ENCODE measurements at regions of chr1 and their contacts with region 1.

Region 1: DNA sequence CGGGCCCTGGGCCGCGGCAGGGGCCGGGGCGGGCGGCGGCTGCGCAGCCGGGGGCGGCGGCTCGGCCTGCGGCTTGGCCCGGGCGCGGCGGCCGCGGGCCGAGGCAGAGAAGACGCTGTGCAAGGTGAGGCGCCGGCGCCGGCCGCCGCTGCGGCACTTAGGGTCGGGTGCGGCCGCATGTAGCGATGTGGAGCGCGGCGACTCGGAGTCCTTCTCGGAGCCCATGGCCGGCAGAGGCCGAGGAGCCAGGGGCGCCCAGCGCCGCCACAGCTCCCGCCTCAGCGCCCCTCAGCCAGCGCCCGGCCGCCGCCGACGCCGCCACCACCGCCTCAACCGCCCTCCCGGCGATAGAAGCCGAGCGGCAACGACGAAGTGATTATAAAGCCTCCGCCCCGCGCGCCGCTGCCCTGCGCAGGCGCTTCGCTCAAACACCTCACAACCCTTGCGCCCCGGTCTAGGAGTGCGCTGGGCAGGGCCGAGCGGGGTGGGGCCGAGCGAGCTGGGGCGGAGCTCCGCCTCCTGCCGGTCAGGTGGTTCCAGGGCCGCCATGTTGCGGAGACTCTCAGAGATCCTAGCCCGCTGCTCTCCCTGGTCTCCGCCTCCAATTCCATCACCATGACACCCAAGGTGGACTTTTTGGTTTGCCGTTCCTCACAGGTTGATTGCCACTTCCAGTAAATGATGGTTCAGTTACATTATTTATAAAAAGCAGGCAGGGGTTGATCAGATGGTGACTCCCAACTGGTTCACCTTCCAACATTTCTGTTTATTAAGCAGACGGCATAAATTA is at the start of gene RNF19B:
- DNase-seq: peak; percentile 92 to 95 (median 93)
- H3K4me3 ChIP-seq: peak within 1 kb of the TSS; percentile 76 to 79
- H3K4me3 Mint-ChIP-seq: peak within 1 kb of the TSS; percentile 87 to 94 (median 90)
- H3K27ac ChIP-seq: peak within 1 kb of the TSS; percentile 63
- H3K27ac Mint-ChIP-seq: peak within 1 kb of the TSS; percentile 90 to 97 (median 95)
- H3K4me1 ChIP-seq: peaks cover 38% of the 10 kb centered on the region
- H3K4me1 Mint-ChIP-seq: peaks cover 27 to 47% (median 33%) of the 10 kb centered on the region in 4 donors
- H3K27me3 ChIP-seq: no peaks in the 10 kb centered on the region
- H3K27me3 Mint-ChIP-seq: no peaks in the 10 kb centered on the region
- total RNA-seq, gene RNF19B: 28.5 to 30.6 TPM

Region 2: GRCh38 chr1:32786856-32787255 is 177.8 kb before region 1 on chr1:
- CTCF ChIA-PET with region 1: no interaction called
- POLR2A ChIA-PET with region 1: no interaction called
- intact Hi-C with region 1: no loop called
- DNase-seq: no peak
- H3K4me3 ChIP-seq: no peak overlapping the region
- H3K4me3 Mint-ChIP-seq: no peak overlapping the region
- H3K27ac ChIP-seq: no peak overlapping the region
- H3K27ac Mint-ChIP-seq: peak overlapping the region in 4 of 7 donors; percentile 61 to 79 (median 70)
- H3K4me1 ChIP-seq: no peaks in the 10 kb centered on the region
- H3K4me1 Mint-ChIP-seq: peaks cover 2 to 7% (median 3%) of the 10 kb centered on the region in 4 donors
- H3K27me3 ChIP-seq: no peaks in the 10 kb centered on the region
- H3K27me3 Mint-ChIP-seq: no peaks in the 10 kb centered on the region

Region 3: GRCh38 chr1:32933742-32934322 is 30.8 kb before region 1 on chr1:
- CTCF ChIA-PET with region 1: interaction called, 6 read pairs
- POLR2A ChIA-PET with region 1: interaction called, 18 read pairs
- intact Hi-C with region 1: no loop called
- DNase-seq: no peak
- H3K4me3 ChIP-seq: no peak overlapping the region
- H3K4me3 Mint-ChIP-seq: no peak overlapping the region
- H3K27ac ChIP-seq: no peak overlapping the region
- H3K27ac Mint-ChIP-seq: peak overlapping the region in 3 of 7 donors; percentile 43 to 91 (median 61)
- H3K4me1 ChIP-seq: no peaks in the 10 kb centered on the region
- H3K4me1 Mint-ChIP-seq: peaks cover 0 to 4% (median 0%) of the 10 kb centered on the region in 4 donors
- H3K27me3 ChIP-seq: no peaks in the 10 kb centered on the region
- H3K27me3 Mint-ChIP-seq: no peaks in the 10 kb centered on the region

Region 4: GRCh38 chr1:32953495-32953894 is 11.2 kb before region 1 on chr1:
- CTCF ChIA-PET with region 1: interaction called, 4 read pairs
- POLR2A ChIA-PET with region 1: interaction called, 28 read pairs
- intact Hi-C with region 1: no loop called
- DNase-seq: no peak
- H3K4me3 ChIP-seq: no peak overlapping the region
- H3K4me3 Mint-ChIP-seq: peak overlapping the region in 1 of 8 donors; percentile 15
- H3K27ac ChIP-seq: no peak overlapping the region
- H3K27ac Mint-ChIP-seq: peak overlapping the region in 4 of 7 donors; percentile 1 to 67 (median 40)
- H3K4me1 ChIP-seq: peaks cover 35% of the 10 kb centered on the region
- H3K4me1 Mint-ChIP-seq: peaks cover 30 to 63% (median 45%) of the 10 kb centered on the region in 4 donors
- H3K27me3 ChIP-seq: no peaks in the 10 kb centered on the region
- H3K27me3 Mint-ChIP-seq: no peaks in the 10 kb centered on the region

Region 5: DNA sequence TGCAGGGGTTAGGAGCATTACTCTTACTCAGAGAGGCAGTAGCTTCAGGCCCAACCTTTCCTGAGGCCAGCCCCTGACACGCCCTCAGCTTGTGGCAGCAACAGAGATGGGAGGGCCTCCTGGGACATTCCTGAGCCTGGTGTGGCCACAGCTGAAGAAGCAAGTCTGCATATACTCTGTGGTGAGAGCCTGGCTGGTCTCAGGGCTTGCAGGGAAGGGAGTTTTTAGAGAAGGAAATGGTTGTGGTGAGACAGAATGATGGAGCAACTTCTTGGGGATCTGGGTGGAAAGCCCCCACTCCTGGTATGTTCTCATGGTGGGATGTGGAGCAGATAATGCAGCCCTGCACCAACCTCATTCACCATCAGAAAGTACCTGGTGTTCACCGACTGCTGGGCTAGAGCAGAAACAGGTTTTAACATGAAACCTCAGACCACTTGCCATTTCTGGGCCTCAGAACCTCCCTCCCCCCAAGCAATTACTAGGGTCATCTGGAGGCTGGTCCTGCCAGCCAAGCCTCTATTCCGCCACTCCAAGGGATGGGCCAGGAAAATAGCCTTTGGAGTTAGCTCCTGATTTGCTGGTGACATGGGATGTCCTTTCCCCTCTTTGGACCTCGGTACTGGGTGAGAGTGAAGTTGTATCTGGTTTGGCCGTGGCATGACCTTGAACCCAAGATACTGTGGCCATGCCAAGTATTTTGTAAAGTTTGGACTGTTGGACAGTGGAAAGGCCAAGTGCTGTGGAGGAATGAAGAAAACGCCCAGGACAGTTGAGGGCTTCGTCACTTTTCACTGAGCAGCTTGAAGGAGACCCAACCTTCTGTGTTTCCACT is 28.1 kb after region 1 on chr1:
- CTCF ChIA-PET with region 1: interaction called, 3 read pairs
- POLR2A ChIA-PET with region 1: interaction called, 60 read pairs
- intact Hi-C with region 1: no loop called
- DNase-seq: peak; percentile 18 to 86 (median 36)
- H3K4me3 ChIP-seq: no peak overlapping the region
- H3K4me3 Mint-ChIP-seq: peak overlapping the region in 2 of 8 donors; percentile 24 to 35
- H3K27ac ChIP-seq: peak overlapping the region; percentile 40
- H3K27ac Mint-ChIP-seq: peak overlapping the region; percentile 47 to 95 (median 83)
- H3K4me1 ChIP-seq: peaks cover 35% of the 10 kb centered on the region
- H3K4me1 Mint-ChIP-seq: peaks cover 19 to 44% (median 35%) of the 10 kb centered on the region in 4 donors
- H3K27me3 ChIP-seq: no peaks in the 10 kb centered on the region
- H3K27me3 Mint-ChIP-seq: no peaks in the 10 kb centered on the region

Region 6: DNA sequence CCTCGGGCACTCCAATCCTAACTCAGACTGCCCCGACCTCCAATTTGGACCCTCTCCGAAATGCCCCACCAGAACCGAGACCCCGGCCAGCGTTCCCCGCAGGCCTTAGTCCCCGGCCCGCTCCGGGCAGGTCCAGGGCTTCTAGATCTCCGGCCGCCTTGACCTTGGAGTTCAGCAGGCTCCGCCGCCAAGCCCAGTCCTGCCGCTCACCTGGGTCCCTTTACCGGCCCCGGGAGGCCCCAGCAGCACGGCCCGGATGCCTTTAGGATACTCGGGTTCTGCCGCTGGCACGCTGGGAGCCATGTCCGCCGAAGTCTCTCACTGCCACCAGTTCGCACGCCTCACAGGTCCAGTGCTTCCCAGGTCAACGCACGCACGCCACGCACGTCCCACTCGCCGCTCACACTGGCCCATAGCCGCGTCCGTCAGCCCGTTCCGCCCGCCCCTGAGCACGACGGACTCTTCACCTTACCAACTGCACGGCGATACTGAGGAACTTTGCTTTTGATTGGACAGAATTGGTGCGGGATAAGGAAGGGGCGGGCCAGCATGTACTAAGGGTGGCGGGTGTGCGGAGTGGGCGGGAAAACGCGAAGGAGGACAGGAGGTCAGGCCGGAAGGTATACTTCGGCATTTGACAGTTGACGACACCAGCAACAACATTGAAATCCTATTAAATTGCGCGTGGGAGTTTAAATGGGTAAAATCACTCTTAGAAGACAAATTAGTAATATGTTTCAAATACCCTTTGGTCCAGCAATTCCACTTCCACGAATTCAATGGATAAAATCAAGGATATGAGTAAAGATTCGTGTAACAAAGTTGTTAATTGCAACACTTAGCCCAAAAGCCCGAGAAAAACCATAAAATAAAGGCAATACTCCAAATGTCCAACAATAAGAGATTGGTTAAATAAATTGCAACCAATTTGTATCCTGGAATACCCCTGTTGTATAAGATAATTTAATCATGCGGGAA is 72.2 kb after region 1 on chr1 and contains the start of gene AK2:
- CTCF ChIA-PET with region 1: no interaction called
- POLR2A ChIA-PET with region 1: interaction called, 13 read pairs
- intact Hi-C with region 1: loop called (anchors 1 kb)
- DNase-seq: peak; percentile 85 to 90 (median 88)
- H3K4me3 ChIP-seq: peak within 1 kb of the TSS; percentile 79 to 85
- H3K4me3 Mint-ChIP-seq: peak within 1 kb of the TSS; percentile 96 to 100 (median 98)
- H3K27ac ChIP-seq: peak within 1 kb of the TSS; percentile 70
- H3K27ac Mint-ChIP-seq: peak within 1 kb of the TSS; percentile 40 to 96 (median 95)
- H3K4me1 ChIP-seq: peaks cover 33% of the 10 kb centered on the region
- H3K4me1 Mint-ChIP-seq: peaks cover 21 to 51% (median 40%) of the 10 kb centered on the region in 4 donors
- H3K27me3 ChIP-seq: no peaks in the 10 kb centered on the region
- H3K27me3 Mint-ChIP-seq: no peaks in the 10 kb centered on the region
- total RNA-seq, gene AK2: 88.5 to 94.5 TPM